ENCODE measurements at regions of chr6 and their contacts with region 1.

Region 1: GRCh38 chr6:83067448-83068413 is at the start of gene DOP1A:
- DNase-seq: peak; percentile 94
- CTCF ChIP-seq: peak; percentile 97

Region 2: GRCh38 chr6:82968708-82969107 is 99.0 kb before region 1 on chr6:
- in situ Hi-C with region 1: no loop called
- DNase-seq: no peak
- CTCF ChIP-seq: no peak

Region 3: GRCh38 chr6:82980086-82980485 is 87.6 kb before region 1 on chr6:
- in situ Hi-C with region 1: no loop called
- DNase-seq: no peak
- CTCF ChIP-seq: no peak

Region 4: GRCh38 chr6:83221889-83222479 is 154.3 kb after region 1 on chr6:
- in situ Hi-C with region 1: loop called (anchors 5 kb)
- DNase-seq: peak; percentile 17
- CTCF ChIP-seq: peak; percentile 51

Region 5: GRCh38 chr6:83341765-83342164 is 274.0 kb after region 1 on chr6:
- in situ Hi-C with region 1: no loop called
- DNase-seq: no peak
- CTCF ChIP-seq: no peak